PC-3 (cell line): ENCODE measurements at regions of chr17 and their contacts with region 1.

Region 1: GRCh38 chr17:48791128-48792032 is 25.6 kb downstream of the TTLL6 start:
- DNase-seq: peak; percentile 99
- ATAC-seq: peak; percentile 92
- H3K4me3 ChIP-seq: peak overlapping the region; percentile 19; the same call in 1 of the 2 replicates
- H3K27ac ChIP-seq: no peak overlapping the region
- H3K4me1 ChIP-seq: peaks cover 30% of the 10 kb centered on the region
- H3K27me3 ChIP-seq: no peaks in the 10 kb centered on the region
- CTCF ChIP-seq: peak; percentile 98

Region 2: GRCh38 chr17:48625495-48626244 is 165.7 kb before region 1 on chr17:
- CTCF ChIA-PET with region 1: no interaction called
- POLR2A ChIA-PET with region 1: no interaction called
- intact Hi-C with region 1: no loop called
- DNase-seq: peak; percentile 77
- ATAC-seq: peak; percentile 84
- H3K4me3 ChIP-seq: peak overlapping the region; percentile 70
- H3K27ac ChIP-seq: no peak overlapping the region
- H3K4me1 ChIP-seq: peaks cover 12% of the 10 kb centered on the region
- H3K27me3 ChIP-seq: peaks cover 59% of the 10 kb centered on the region
- CTCF ChIP-seq: no peak

Region 3: GRCh38 chr17:48671697-48672171 is 119.6 kb before region 1 on chr17:
- CTCF ChIA-PET with region 1: interaction called, 7 read pairs
- POLR2A ChIA-PET with region 1: interaction called, 4 read pairs
- intact Hi-C with region 1: loop called (anchors 1 kb)
- DNase-seq: peak; percentile 95
- ATAC-seq: peak; percentile 72
- H3K4me3 ChIP-seq: peak overlapping the region; percentile 64
- H3K27ac ChIP-seq: no peak overlapping the region
- H3K4me1 ChIP-seq: peaks cover 5% of the 10 kb centered on the region; the same call in 1 of the 2 replicates
- H3K27me3 ChIP-seq: no peaks in the 10 kb centered on the region
- CTCF ChIP-seq: peak; percentile 96

Region 4: GRCh38 chr17:48678141-48678971 is 113.0 kb before region 1 on chr17:
- CTCF ChIA-PET with region 1: interaction called, 32 read pairs
- POLR2A ChIA-PET with region 1: interaction called, 4 read pairs
- intact Hi-C with region 1: loop called (anchors 1 kb)
- DNase-seq: peak; percentile 90
- ATAC-seq: peak; percentile 91
- H3K4me3 ChIP-seq: peak overlapping the region; percentile 68
- H3K27ac ChIP-seq: no peak overlapping the region
- H3K4me1 ChIP-seq: peaks cover 11% of the 10 kb centered on the region; the same call in 1 of the 2 replicates
- H3K27me3 ChIP-seq: no peaks in the 10 kb centered on the region
- CTCF ChIP-seq: peak; percentile 100

Region 5: GRCh38 chr17:48718761-48719641 is 72.4 kb before region 1 on chr17:
- CTCF ChIA-PET with region 1: interaction called, 76 read pairs
- POLR2A ChIA-PET with region 1: interaction called, 22 read pairs
- intact Hi-C with region 1: loop called (anchors 1 kb)
- DNase-seq: peak; percentile 47
- ATAC-seq: no peak
- H3K4me3 ChIP-seq: peak overlapping the region; percentile 90
- H3K27ac ChIP-seq: peak overlapping the region; percentile 87
- H3K4me1 ChIP-seq: peaks cover 31% of the 10 kb centered on the region
- H3K27me3 ChIP-seq: no peaks in the 10 kb centered on the region
- CTCF ChIP-seq: no peak

Region 6: GRCh38 chr17:48738803-48739526 is 52.4 kb before region 1 on chr17:
- CTCF ChIA-PET with region 1: interaction called, 7 read pairs
- POLR2A ChIA-PET with region 1: no interaction called
- intact Hi-C with region 1: loop called (anchors 5 kb)
- DNase-seq: peak; percentile 91
- ATAC-seq: peak; percentile 53
- H3K4me3 ChIP-seq: peak overlapping the region; percentile 66
- H3K27ac ChIP-seq: peak overlapping the region; percentile 61
- H3K4me1 ChIP-seq: peaks cover 52% of the 10 kb centered on the region
- H3K27me3 ChIP-seq: no peaks in the 10 kb centered on the region
- CTCF ChIP-seq: no peak

Region 7: DNA sequence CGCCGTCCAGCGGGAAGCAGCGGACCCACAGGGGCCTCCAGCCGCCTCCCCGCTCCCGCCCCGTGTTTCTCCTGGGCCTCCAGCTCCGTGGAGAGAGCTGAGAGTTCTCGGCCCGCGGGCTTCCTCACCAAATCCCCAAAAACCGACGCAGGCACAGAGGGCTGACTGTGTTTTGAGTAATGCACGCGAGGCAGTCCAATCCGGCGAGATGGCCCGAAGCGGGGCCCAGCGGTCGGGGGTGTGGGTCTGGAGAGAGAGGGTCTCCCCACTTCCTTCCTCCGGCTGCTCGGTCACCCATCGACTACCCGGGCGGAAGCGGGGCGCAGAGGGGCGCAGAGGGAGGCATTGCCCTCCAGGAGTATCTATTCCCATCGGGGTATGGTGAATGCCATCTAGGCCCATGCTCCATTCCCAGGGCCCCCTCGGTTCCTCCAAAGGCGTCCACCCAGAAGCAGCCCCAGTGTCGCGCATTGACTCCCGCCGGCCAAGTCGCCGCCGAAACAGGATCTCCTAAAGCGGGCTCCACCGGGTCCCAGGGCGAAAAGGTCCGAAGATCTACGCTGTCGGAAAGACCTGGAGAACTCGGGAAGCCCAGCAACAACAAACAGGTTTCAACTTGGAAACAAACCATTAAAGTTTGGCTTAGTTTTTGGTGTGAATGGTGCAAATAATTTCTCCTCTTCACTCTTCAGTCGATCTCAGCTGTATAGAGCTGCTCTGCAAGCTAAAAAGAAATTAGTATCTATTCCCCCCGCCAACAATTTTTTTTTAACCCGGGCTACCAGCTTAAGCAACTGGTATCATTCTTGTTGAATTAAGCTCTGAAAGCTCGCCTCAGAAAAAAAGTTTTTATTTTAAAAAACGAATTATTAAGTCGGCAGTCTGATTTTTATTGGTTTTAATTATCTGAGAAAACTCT is 43.7 kb before region 1 on chr17:
- CTCF ChIA-PET with region 1: interaction called, 13 read pairs
- POLR2A ChIA-PET with region 1: no interaction called
- intact Hi-C with region 1: loop called (anchors 1 kb)
- DNase-seq: peak; percentile 71
- ATAC-seq: peak; percentile 27
- H3K4me3 ChIP-seq: peak overlapping the region; percentile 78
- H3K27ac ChIP-seq: peak overlapping the region; percentile 74
- H3K4me1 ChIP-seq: peaks cover 50% of the 10 kb centered on the region
- H3K27me3 ChIP-seq: no peaks in the 10 kb centered on the region
- CTCF ChIP-seq: no peak

Region 8: GRCh38 chr17:48756830-48757251 is 34.5 kb before region 1 on chr17:
- CTCF ChIA-PET with region 1: interaction called, 13 read pairs
- POLR2A ChIA-PET with region 1: no interaction called
- intact Hi-C with region 1: loop called (anchors 2 kb)
- DNase-seq: peak; percentile 43
- ATAC-seq: peak; percentile 44
- H3K4me3 ChIP-seq: no peak overlapping the region
- H3K27ac ChIP-seq: peak overlapping the region; percentile 32
- H3K4me1 ChIP-seq: peaks cover 55% of the 10 kb centered on the region
- H3K27me3 ChIP-seq: no peaks in the 10 kb centered on the region
- CTCF ChIP-seq: no peak

Region 9: DNA sequence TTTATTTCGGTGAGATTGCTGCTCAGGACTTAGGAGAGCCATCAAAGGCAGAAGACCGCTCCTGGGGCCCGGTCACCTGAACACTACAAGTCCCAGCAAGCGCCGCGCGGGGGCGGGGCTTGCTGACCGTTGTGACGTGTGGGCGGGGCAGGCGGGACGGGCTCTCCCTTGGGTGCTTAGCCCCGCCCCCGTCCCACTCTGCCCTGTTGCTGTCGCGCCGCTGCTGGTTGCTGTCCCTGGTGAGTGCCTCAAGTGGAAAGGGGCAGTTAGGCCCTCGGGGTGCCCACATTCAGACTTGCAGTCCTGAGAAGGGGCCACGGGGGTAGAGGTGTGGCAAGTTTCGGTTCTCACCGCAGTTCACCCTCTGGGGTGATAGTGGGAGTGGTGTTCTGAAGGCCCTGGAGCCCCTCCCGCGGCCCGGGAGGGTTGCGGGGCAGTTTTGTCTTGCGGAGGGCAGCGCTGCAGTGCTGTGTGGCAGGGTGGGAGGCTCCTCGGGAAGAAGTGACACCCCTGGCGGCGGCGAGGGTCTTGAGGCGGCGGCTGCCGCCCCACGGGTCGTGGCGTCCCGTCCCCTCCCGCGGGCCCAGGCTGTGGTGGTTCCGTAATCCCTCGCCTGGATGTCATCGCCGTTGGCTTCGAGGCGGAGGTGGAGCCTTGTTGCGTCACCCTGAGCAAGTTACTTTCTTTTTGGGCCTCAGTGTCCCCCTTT is 39.6 kb after region 1 on chr17 and contains the start of gene CALCOCO2:
- CTCF ChIA-PET with region 1: no interaction called
- POLR2A ChIA-PET with region 1: no interaction called
- intact Hi-C with region 1: no loop called
- DNase-seq: peak; percentile 99
- ATAC-seq: peak; percentile 95
- H3K4me3 ChIP-seq: peak within 1 kb of the TSS; percentile 83
- H3K27ac ChIP-seq: peak within 1 kb of the TSS; percentile 12; the same call in 1 of the 2 replicates
- H3K4me1 ChIP-seq: peaks cover 37% of the 10 kb centered on the region
- H3K27me3 ChIP-seq: no peaks in the 10 kb centered on the region
- CTCF ChIP-seq: peak; percentile 24; the same call in 1 of the 2 replicates
- total RNA-seq, gene CALCOCO2: 47.2 and 49.4 TPM in 2 replicates